Aorta (tissue), 5 donors: ENCODE measurements at regions of chr4 and their contacts with region 1.

Region 1: GRCh38 chr4:139453371-139454110 is 380 bp upstream of the RAB33B start:
- DNase-seq: peak; percentile 99
- ATAC-seq: peak; percentile 98
- H3K4me3 ChIP-seq: peak overlapping the region; percentile 57 to 88
- H3K27ac ChIP-seq: peak overlapping the region; percentile 64 to 71
- H3K4me1 ChIP-seq: no peaks in the 10 kb centered on the region
- H3K27me3 ChIP-seq: no peaks in the 10 kb centered on the region

Region 2: DNA sequence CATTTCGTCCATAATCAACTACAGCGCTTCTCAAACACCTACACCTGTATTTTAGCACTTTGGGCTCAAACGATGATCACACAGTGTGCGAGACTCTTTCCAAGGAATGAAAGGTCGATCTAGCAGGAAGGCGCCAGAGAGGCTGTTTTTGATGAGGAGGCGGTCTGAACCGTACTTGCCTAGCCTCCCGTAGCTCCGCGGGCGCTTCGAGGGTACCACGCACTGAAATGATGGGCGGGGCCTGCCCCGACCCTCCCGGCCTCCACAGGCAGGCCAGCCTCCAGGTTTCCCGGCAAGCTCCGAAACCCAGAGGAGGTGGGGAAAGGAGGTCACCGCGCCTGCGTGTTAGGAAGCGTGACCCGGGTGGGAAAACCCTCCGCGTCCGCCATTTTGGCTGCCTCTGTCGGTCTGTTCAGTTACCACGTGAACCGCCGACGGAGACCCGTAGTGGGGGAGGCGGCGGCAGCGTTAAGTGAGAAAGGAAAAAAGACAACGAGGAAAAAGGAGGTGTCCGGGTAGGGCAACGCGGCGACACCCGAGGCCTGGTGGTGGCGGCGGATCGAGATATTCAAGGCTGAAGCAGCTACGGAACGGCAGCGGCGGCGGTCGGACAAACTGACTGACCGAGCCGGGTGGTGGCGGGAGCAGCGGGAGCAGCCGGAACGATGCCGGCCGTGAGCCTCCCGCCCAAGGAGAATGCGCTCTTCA is 152.3 kb before region 1 on chr4 and contains the start of gene NAA15:
- intact Hi-C with region 1: loop called in 1 of 2 experiments (anchors 10 kb)
- DNase-seq: peak; percentile 99
- ATAC-seq: peak; percentile 99
- H3K4me3 ChIP-seq: peak within 1 kb of the TSS; percentile 87 to 95
- H3K27ac ChIP-seq: peak within 1 kb of the TSS; percentile 77 to 97
- H3K4me1 ChIP-seq: no peaks in the 10 kb centered on the region
- H3K27me3 ChIP-seq: no peaks in the 10 kb centered on the region
- total RNA-seq, gene NAA15: 42.8 to 45.4 TPM

Region 3: GRCh38 chr4:139530833-139531427 is 77.4 kb after region 1 on chr4:
- intact Hi-C with region 1: loop called in 1 of 2 experiments (anchors 5 kb)
- DNase-seq: no peak
- ATAC-seq: peak; percentile 77
- H3K4me3 ChIP-seq: no peak overlapping the region
- H3K27ac ChIP-seq: no peak overlapping the region
- H3K4me1 ChIP-seq: no peaks in the 10 kb centered on the region
- H3K27me3 ChIP-seq: no peaks in the 10 kb centered on the region

Region 4: GRCh38 chr4:139554893-139555704 is 101.6 kb after region 1 on chr4:
- intact Hi-C with region 1: loop called in 1 of 2 experiments (anchors 10 kb)
- DNase-seq: peak; percentile 95 to 96
- ATAC-seq: peak; percentile 86
- H3K4me3 ChIP-seq: peak overlapping the region; percentile 75 to 79
- H3K27ac ChIP-seq: peak overlapping the region; percentile 86 to 93
- H3K4me1 ChIP-seq: peaks cover 0 to 9% of the 10 kb centered on the region in 2 donors
- H3K27me3 ChIP-seq: no peaks in the 10 kb centered on the region

Region 5: GRCh38 chr4:139603576-139604387 is 150.2 kb after region 1 on chr4:
- intact Hi-C with region 1: no loop called
- DNase-seq: no peak
- ATAC-seq: no peak
- H3K4me3 ChIP-seq: no peak overlapping the region
- H3K27ac ChIP-seq: no peak overlapping the region
- H3K4me1 ChIP-seq: no peaks in the 10 kb centered on the region
- H3K27me3 ChIP-seq: no peaks in the 10 kb centered on the region

Region 6: GRCh38 chr4:140163029-140163810 is 709.7 kb after region 1 on chr4:
- intact Hi-C with region 1: loop called in 1 of 2 experiments (anchors 10 kb)
- DNase-seq: peak in 1 of 2 donors; percentile 58
- ATAC-seq: peak; percentile 80
- H3K4me3 ChIP-seq: no peak overlapping the region
- H3K27ac ChIP-seq: no peak overlapping the region
- H3K4me1 ChIP-seq: no peaks in the 10 kb centered on the region
- H3K27me3 ChIP-seq: no peaks in the 10 kb centered on the region